Heart left ventricle (tissue), 16 donors: ENCODE measurements at regions of chr1 and their contacts with region 1.

Region 1: DNA sequence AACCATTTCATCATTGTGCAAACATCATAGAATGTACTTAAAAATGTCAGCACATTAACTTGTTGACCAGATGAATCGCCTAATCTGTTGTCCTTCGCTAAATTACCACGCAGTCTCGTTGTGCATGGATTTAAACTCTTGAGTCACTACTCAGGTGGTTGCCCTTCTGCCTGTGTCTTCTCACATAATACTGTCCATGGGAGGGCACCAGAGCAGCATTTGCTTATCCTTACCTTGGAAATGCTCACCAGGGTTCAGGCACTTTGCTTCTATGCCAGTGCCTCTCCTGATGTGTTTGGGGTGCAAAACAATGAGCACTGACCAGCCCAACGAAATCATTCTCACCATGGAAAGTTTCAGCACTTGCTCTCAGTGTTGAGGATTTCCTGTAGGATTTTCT is 559.9 kb downstream of the RWDD3 start:
- DNase-seq: no peak
- ATAC-seq: no peak
- H3K4me3 ChIP-seq: no peak overlapping the region
- H3K27ac ChIP-seq: no peak overlapping the region
- H3K4me1 ChIP-seq: no peaks in the 10 kb centered on the region
- H3K27me3 ChIP-seq: no peaks in the 10 kb centered on the region
- CTCF ChIP-seq: no peak
- POLR2A ChIP-seq: no peak

Region 2: GRCh38 chr1:95438218-95438948 is 355.5 kb before region 1 on chr1:
- intact Hi-C with region 1: loop called in 1 of 10 experiments (anchors 5 kb)
- DNase-seq: no peak
- ATAC-seq: no peak
- H3K4me3 ChIP-seq: no peak overlapping the region
- H3K27ac ChIP-seq: no peak overlapping the region
- H3K4me1 ChIP-seq: no peaks in the 10 kb centered on the region
- H3K27me3 ChIP-seq: no peaks in the 10 kb centered on the region
- CTCF ChIP-seq: no peak
- POLR2A ChIP-seq: no peak

Region 3: DNA sequence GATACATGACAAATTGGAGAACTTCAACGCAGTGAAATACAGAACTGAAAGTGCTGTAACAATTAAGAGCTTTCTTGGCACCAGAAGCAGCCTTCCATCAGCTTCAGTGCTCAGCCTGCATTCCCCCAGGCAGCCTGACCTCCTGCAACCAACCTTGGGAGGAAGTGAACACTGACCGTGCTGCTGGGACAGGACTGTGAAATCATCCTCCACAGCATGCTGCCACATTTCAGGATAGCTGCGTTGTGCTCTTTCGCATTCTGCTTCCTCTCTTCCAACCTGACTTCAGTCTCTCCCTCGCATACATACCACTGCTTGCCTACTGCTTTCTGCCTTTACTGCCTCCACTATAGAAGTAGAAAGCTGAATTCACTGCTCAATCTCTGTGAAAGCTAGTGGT is 171.3 kb before region 1 on chr1:
- intact Hi-C with region 1: no loop called
- DNase-seq: no peak
- ATAC-seq: no peak
- H3K4me3 ChIP-seq: no peak overlapping the region
- H3K27ac ChIP-seq: no peak overlapping the region
- H3K4me1 ChIP-seq: no peaks in the 10 kb centered on the region
- H3K27me3 ChIP-seq: no peaks in the 10 kb centered on the region
- CTCF ChIP-seq: no peak
- POLR2A ChIP-seq: no peak

Region 4: DNA sequence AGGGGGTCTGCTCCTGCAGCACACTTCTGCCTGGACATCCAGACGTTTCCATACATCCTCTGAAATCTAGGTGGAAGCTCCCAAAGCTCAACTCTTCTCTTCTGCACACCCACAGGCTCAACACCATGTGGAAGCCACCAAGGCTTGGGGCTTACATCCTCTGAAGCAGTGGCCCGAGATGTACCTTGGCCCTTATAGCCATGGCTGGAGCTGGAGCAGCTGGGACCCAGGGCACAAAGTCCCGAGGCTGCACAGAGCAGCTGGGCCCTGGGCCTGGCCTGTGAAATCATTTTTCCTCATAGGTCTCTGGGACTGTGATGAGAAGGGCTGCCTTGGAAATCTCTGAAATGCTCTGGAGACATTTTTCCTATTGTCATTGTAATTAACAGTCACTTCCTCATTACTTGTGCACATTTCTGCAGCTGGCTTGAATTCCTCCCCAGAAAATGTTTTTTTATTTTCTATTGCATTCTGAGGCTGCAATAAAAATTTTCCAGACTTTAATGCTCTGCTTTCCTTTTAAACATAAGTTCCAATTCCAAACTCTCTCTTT is 85.7 kb after region 1 on chr1:
- intact Hi-C with region 1: no loop called
- DNase-seq: no peak
- ATAC-seq: no peak
- H3K4me3 ChIP-seq: no peak overlapping the region
- H3K27ac ChIP-seq: no peak overlapping the region
- H3K4me1 ChIP-seq: no peaks in the 10 kb centered on the region
- H3K27me3 ChIP-seq: no peaks in the 10 kb centered on the region
- CTCF ChIP-seq: no peak
- POLR2A ChIP-seq: no peak